ENCODE measurements at regions of chr13 and their contacts with region 1.

Region 1: DNA sequence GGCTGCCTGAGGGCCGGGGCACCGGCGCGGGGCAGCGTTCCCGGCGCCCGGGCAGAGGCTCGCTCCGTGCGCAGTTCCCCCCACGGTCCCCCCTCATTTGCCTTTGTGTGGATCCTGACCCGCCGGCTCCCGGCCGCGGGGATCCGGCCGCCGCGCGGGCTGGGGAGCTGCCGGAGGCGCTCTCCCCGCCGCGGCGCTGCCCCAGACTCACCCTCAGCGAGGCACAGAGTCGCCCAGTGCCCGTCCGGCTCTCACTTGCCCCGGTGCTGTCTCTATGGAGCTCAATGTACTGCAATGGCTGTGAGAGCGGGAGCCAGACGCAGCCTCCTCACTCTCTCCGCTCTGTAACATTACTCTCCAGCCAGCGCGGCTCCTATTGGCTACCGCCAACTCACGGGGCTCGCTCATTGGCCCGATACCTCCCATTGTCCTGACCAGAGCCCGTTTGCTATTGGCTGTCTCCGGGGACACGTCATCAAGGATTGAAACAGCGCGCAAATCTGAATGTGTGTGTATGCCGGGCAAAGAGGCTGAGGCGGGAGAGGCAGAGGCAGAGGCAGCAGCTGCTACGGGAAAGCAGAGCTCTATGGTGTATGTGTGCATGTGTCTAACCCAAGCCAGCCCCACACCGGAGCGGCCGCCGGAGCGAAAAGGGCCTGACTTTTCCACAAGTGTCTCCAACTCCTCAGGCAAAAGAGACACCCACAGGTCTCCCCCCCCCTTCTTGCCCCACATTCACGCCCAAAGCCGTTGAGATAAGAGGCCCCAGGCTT is at the start of gene HMGB1:
- DNase-seq: peak; percentile 98
- ATAC-seq: peak; percentile 93
- H3K4me3 Mint-ChIP-seq: peak within 1 kb of the TSS; percentile 86
- H3K27ac Mint-ChIP-seq: peak within 1 kb of the TSS; percentile 98
- H3K4me1 Mint-ChIP-seq: peaks cover 19% of the 10 kb centered on the region
- H3K27me3 Mint-ChIP-seq: no peaks in the 10 kb centered on the region
- total RNA-seq, gene HMGB1: 764 to 851 TPM

Region 2: GRCh38 chr13:29850224-29850898 is 615.4 kb before region 1 on chr13 and contains the start of gene UBL3:
- CTCF ChIA-PET with region 1: no interaction called
- POLR2A ChIA-PET with region 1: no interaction called
- intact Hi-C with region 1: loop called in 1 of 2 experiments (anchors 2 kb)
- DNase-seq: peak; percentile 98
- ATAC-seq: peak; percentile 86
- H3K4me3 Mint-ChIP-seq: peak within 1 kb of the TSS; percentile 90
- H3K27ac Mint-ChIP-seq: peak within 1 kb of the TSS; percentile 98
- H3K4me1 Mint-ChIP-seq: peaks cover 42% of the 10 kb centered on the region
- H3K27me3 Mint-ChIP-seq: no peaks in the 10 kb centered on the region
- total RNA-seq, gene UBL3: 9.1 to 10.7 TPM

Region 3: GRCh38 chr13:30371649-30372265 is 94.0 kb before region 1 on chr13:
- CTCF ChIA-PET with region 1: interaction called, 3 read pairs
- POLR2A ChIA-PET with region 1: interaction called, 9 read pairs
- intact Hi-C with region 1: loop called (anchors 1 kb)
- DNase-seq: peak; percentile 81
- ATAC-seq: peak; percentile 67
- H3K4me3 Mint-ChIP-seq: peak overlapping the region; percentile 59
- H3K27ac Mint-ChIP-seq: peak overlapping the region; percentile 69
- H3K4me1 Mint-ChIP-seq: peaks cover 75% of the 10 kb centered on the region
- H3K27me3 Mint-ChIP-seq: no peaks in the 10 kb centered on the region

Region 4: GRCh38 chr13:30422054-30422839 is 43.5 kb before region 1 on chr13 and contains the start of gene UBE2L5:
- CTCF ChIA-PET with region 1: no interaction called
- POLR2A ChIA-PET with region 1: interaction called, 6 read pairs
- intact Hi-C with region 1: loop called (anchors 1 to 2 kb)
- DNase-seq: peak; percentile 85
- ATAC-seq: peak; percentile 96
- H3K4me3 Mint-ChIP-seq: peak within 1 kb of the TSS; percentile 77
- H3K27ac Mint-ChIP-seq: peak within 1 kb of the TSS; percentile 69
- H3K4me1 Mint-ChIP-seq: peaks cover 12% of the 10 kb centered on the region
- H3K27me3 Mint-ChIP-seq: no peaks in the 10 kb centered on the region
- total RNA-seq, gene UBE2L5: 0.11 TPM in 1 of 2 experiments, not detected in the other

Region 5: GRCh38 chr13:30617315-30618185 is 151.8 kb after region 1 on chr13 and contains the start of gene USPL1:
- CTCF ChIA-PET with region 1: interaction called, 4 read pairs
- POLR2A ChIA-PET with region 1: interaction called, 19 read pairs
- intact Hi-C with region 1: loop called (anchors 1 kb)
- DNase-seq: peak; percentile 99
- ATAC-seq: peak; percentile 92
- H3K4me3 Mint-ChIP-seq: no peak within 1 kb of the TSS
- H3K27ac Mint-ChIP-seq: no peak within 1 kb of the TSS
- H3K4me1 Mint-ChIP-seq: peaks cover 31% of the 10 kb centered on the region
- H3K27me3 Mint-ChIP-seq: no peaks in the 10 kb centered on the region
- total RNA-seq, gene USPL1: 14.8 to 16.9 TPM

Region 6: GRCh38 chr13:30802953-30803478 is 337.2 kb after region 1 on chr13:
- CTCF ChIA-PET with region 1: no interaction called
- POLR2A ChIA-PET with region 1: no interaction called
- intact Hi-C with region 1: loop called (anchors 1 to 5 kb)
- DNase-seq: peak; percentile 91
- ATAC-seq: peak; percentile 99
- H3K4me3 Mint-ChIP-seq: no peak overlapping the region
- H3K27ac Mint-ChIP-seq: no peak overlapping the region
- H3K4me1 Mint-ChIP-seq: peaks cover 4% of the 10 kb centered on the region
- H3K27me3 Mint-ChIP-seq: no peaks in the 10 kb centered on the region

Region 7: GRCh38 chr13:31199849-31200636 is 734.3 kb after region 1 on chr13 and contains the start of gene B3GLCT:
- CTCF ChIA-PET with region 1: no interaction called
- POLR2A ChIA-PET with region 1: no interaction called
- intact Hi-C with region 1: loop called in 1 of 2 experiments (anchors 5 kb)
- DNase-seq: peak; percentile 87
- ATAC-seq: peak; percentile 81
- H3K4me3 Mint-ChIP-seq: peak within 1 kb of the TSS; percentile 71
- H3K27ac Mint-ChIP-seq: peak within 1 kb of the TSS; percentile 58
- H3K4me1 Mint-ChIP-seq: peaks cover 34% of the 10 kb centered on the region
- H3K27me3 Mint-ChIP-seq: no peaks in the 10 kb centered on the region
- total RNA-seq, gene B3GLCT: 2.1 to 2.4 TPM